Gastrocnemius medialis (tissue), 4 donors: ENCODE measurements at regions of chr7 and their contacts with region 1.

Region 1: DNA sequence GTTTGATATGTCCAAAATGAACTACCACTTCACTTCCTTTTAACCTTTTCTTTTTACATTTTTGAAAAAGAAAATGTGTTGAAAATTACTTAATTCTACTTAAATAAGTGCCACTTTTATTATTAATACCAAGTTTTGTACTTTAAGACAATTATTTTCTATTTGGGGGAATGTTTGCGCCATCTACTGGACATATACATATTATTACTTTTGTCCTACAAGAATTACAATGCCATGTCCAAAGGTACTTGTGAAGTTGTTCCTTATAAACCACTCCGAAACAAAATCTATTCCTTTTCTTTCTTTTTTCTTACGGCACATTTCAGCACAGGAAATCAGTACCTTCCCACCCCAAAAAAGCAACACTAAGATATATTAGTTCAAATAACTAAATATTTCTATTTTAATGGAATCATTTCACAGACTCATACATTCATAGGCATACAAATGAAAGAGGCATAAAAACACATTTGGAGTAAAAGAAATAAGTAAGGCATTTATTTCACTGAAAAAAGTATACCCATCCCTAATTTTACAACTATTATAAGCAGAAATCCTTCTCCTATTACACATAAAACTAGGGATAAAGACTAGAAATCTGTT is 169.9 kb downstream of the RNF133 start:
- DNase-seq: no peak
- ATAC-seq: no peak
- H3K4me3 ChIP-seq: no peak overlapping the region
- H3K27ac ChIP-seq: no peak overlapping the region
- H3K4me1 ChIP-seq: no peaks in the 10 kb centered on the region
- H3K27me3 ChIP-seq: no peaks in the 10 kb centered on the region
- CTCF ChIP-seq: peak in 4 of 5 experiments; percentile 13 to 55 (median 36)
- POLR2A ChIP-seq: no peak

Region 2: GRCh38 chr7:121961089-121961867 is 567.7 kb before region 1 on chr7:
- in situ Hi-C with region 1: no loop called
- intact Hi-C with region 1: no loop called
- DNase-seq: no peak
- ATAC-seq: no peak
- H3K4me3 ChIP-seq: no peak overlapping the region
- H3K27ac ChIP-seq: no peak overlapping the region
- H3K4me1 ChIP-seq: no peaks in the 10 kb centered on the region
- H3K27me3 ChIP-seq: no peaks in the 10 kb centered on the region
- CTCF ChIP-seq: no peak
- POLR2A ChIP-seq: no peak

Region 3: DNA sequence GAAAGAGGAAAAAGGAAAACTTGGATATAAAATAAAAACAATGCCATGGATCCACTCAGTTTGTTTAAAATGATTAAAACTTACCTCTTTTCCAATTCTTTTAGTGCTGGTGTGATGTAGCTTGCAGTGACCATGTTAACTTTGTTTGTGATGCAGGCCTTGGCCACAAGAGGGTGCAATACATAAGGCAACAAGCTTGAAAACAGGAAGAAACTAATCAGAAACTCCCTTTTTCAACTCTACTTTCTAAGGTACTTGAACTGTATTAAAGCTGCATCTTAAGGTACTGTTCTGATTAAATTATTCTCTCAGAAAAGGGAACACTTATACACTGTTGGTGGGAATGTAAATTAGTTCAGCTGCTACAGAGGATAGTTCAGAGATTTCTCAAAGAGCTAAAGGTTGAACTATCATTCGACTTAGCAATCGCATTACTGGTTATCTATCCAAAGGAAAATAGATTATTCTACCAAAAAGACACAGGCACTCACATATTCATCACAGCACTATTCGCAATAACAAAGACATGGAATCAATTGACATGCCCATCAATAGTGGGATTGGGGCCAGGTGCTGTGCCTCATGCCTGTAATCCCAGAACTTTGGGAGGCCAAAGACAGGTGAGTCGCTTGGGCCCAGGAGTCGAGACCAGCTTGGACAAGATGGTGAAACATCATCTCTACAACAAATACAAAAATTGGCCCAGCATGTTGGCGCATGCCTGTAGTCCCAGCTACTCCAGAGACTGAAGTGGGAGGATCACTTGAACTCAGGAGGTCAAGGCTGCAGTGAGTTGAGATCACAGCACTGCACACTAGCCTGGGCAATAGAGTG is 435.8 kb before region 1 on chr7:
- in situ Hi-C with region 1: loop called in 1 of 4 experiments (anchors 25 kb)
- intact Hi-C with region 1: no loop called
- DNase-seq: peak in 1 of 2 donors; percentile 25
- ATAC-seq: peak in 1 of 2 donors; percentile 51
- H3K4me3 ChIP-seq: no peak overlapping the region
- H3K27ac ChIP-seq: no peak overlapping the region
- H3K4me1 ChIP-seq: no peaks in the 10 kb centered on the region
- H3K27me3 ChIP-seq: no peaks in the 10 kb centered on the region
- CTCF ChIP-seq: peak; percentile 34 to 77 (median 59)
- POLR2A ChIP-seq: no peak